ENCODE measurements at regions of chr20 and their contacts with region 1.

Region 1: DNA sequence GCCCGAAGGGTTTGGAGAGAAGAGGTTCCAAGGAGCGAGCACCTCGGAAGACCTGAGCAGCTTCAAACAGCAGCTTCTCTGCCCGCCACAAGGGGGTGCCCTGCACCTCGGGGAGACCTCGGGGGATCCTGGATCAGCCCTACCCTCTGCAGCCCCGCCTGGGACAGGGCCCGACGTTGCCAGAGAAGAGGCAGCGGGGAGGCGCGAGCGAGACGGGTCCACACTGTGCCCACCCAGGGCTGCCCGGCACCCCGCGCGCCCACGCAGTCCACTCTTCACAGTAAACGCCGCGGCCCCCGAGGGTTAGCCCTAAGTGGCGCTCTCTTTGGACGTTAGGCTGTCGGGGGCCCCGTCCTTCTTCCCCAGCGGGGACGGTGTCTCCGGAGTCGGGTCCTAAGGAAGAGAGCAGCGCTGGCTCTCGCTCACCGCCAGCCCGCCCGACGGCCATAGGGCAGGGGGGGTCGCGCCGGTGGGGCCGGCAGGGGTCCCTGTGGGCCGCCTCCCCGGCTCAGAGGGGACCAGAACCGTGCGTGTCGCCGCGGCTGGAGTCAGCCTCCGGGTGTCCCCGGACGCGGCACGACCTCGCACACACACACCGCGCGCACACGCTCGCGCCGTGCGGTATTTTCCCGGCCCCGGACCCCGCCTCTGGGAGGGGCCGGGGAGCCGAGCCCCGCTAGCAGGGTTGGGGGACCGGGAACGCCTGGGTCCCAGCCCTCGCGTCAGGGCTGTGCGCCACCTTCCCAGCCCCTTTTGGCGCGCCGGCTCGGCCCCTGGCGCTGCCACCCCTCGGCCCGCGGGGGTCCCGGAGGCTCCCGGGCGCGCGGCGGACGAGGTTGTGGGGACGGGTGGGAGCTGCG is 929 bp downstream of the CDH22 start:
- DNase-seq: peak; percentile 25
- H3K4me3 ChIP-seq: no peak overlapping the region
- H3K27ac ChIP-seq: no peak overlapping the region
- H3K4me1 ChIP-seq: peaks cover 8% of the 10 kb centered on the region
- H3K27me3 ChIP-seq: peaks cover 22% of the 10 kb centered on the region
- CTCF ChIP-seq: peak; percentile 70 to 94

Region 2: GRCh38 chr20:46022411-46023147 is 284.8 kb before region 1 on chr20:
- CTCF ChIA-PET with region 1: no interaction called
- dilution Hi-C with region 1: no loop called
- in situ Hi-C with region 1: no loop called
- intact Hi-C with region 1: loop called (anchors 10 kb)
- DNase-seq: peak; percentile 23
- H3K4me3 ChIP-seq: peak overlapping the region; percentile 8 to 59 (median 29)
- H3K27ac ChIP-seq: no peak overlapping the region
- H3K4me1 ChIP-seq: peaks cover 8% of the 10 kb centered on the region
- H3K27me3 ChIP-seq: no peaks in the 10 kb centered on the region
- CTCF ChIP-seq: peak; percentile 57 to 78

Region 3: GRCh38 chr20:46203510-46203837 is 103.9 kb before region 1 on chr20:
- CTCF ChIA-PET with region 1: interaction called, 11 read pairs
- dilution Hi-C with region 1: no loop called
- in situ Hi-C with region 1: no loop called
- intact Hi-C with region 1: no loop called
- DNase-seq: no peak
- H3K4me3 ChIP-seq: no peak overlapping the region
- H3K27ac ChIP-seq: no peak overlapping the region
- H3K4me1 ChIP-seq: peaks cover 4% of the 10 kb centered on the region
- H3K27me3 ChIP-seq: peaks cover 11% of the 10 kb centered on the region
- CTCF ChIP-seq: no peak

Region 4: DNA sequence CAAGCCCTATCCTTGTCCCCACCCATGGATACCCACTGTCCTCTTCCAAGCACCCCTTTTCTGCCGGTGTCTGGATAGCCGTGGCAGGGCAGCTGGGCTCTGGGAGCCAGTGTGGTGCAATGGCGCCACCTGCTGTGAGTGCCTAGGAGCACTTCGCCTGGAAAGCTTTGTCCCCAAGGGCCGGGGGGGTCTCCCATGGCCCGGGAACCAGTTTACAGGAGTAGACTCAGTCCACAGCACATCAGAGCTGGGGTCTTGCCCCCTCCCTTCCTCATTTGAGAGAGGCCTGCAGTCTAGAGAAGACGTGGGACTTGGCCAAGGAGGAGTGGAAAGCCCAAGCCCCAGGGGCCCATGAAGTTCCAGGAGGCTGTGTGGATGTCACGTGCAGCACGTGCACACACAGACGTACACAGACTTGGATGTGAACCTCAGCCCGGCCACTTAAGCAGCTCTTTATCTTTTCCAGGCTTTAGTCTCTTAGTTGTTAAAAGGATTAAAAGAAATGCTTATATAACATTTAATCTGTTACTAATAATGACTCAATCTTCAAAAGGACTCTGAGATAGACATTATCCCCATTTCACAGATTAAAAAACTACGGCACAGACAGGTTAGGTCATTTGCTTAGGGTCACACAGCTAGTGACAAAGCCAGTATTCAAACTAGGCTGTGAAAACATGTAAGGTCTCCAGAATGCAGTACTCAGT is 41.8 kb after region 1 on chr20:
- CTCF ChIA-PET with region 1: no interaction called
- dilution Hi-C with region 1: no loop called
- in situ Hi-C with region 1: no loop called
- intact Hi-C with region 1: loop called (anchors 1 kb)
- DNase-seq: no peak
- H3K4me3 ChIP-seq: no peak overlapping the region
- H3K27ac ChIP-seq: no peak overlapping the region
- H3K4me1 ChIP-seq: peaks cover 11% of the 10 kb centered on the region
- H3K27me3 ChIP-seq: no peaks in the 10 kb centered on the region
- CTCF ChIP-seq: peak; percentile 66 to 92

Region 5: GRCh38 chr20:46375771-46376170 is 68.4 kb after region 1 on chr20:
- CTCF ChIA-PET with region 1: no interaction called
- dilution Hi-C with region 1: no loop called
- in situ Hi-C with region 1: no loop called
- intact Hi-C with region 1: loop called (anchors 2 kb)
- DNase-seq: peak; percentile 41
- H3K4me3 ChIP-seq: no peak overlapping the region
- H3K27ac ChIP-seq: no peak overlapping the region
- H3K4me1 ChIP-seq: peaks cover 31% of the 10 kb centered on the region
- H3K27me3 ChIP-seq: no peaks in the 10 kb centered on the region
- CTCF ChIP-seq: no peak

Region 6: DNA sequence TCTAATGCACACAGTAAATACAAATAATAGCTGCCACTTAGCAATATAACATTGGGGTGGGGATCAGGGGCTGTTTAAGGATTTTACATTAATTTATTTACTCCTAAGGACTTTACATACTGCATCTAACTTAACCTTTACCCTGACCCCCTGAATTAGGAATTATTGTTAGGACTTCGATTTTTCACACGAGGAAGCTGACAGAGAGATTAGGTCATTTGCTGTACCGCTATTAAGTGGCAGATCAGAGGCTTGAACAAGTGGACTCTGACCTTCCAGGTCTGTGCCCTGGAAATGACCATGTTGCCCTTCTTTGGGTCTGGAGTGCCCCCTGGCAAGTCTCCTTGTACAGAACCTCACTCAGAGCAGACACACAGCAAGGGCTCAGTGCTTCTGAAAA is 104.3 kb after region 1 on chr20:
- CTCF ChIA-PET with region 1: no interaction called
- dilution Hi-C with region 1: no loop called
- in situ Hi-C with region 1: no loop called
- intact Hi-C with region 1: loop called (anchors 1 kb)
- DNase-seq: no peak
- H3K4me3 ChIP-seq: no peak overlapping the region
- H3K27ac ChIP-seq: no peak overlapping the region
- H3K4me1 ChIP-seq: peaks cover 19% of the 10 kb centered on the region
- H3K27me3 ChIP-seq: no peaks in the 10 kb centered on the region
- CTCF ChIP-seq: no peak

Region 7: DNA sequence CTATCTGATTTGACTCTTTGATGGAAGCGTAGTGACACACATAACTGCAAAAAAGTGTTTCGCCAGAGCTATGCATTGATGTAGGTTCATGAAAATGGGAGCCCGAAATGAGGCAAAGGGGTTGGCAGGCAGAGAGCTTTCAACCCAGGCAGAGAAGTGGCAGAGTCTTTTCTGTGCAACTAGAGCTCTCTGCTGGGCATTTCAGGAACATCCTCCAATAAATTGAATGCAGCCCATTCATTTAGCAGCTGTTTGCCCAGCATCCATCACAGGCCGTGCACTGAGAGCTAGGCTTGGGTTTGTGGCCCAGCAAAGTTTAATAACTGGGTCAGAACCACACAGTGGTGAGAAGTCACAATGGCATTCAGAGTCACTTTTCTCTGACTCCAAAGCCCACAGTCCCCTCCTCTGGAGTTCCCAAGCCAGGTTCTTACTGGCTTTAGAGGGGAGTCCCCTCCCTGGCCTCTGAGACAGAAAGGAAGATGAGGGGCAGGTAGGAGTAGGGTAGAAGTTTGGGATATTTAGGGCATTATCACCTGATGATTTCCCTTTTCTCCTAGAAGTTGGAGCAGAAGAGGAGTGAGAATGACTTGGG is 130.9 kb after region 1 on chr20:
- CTCF ChIA-PET with region 1: no interaction called
- dilution Hi-C with region 1: no loop called
- in situ Hi-C with region 1: no loop called
- intact Hi-C with region 1: loop called (anchors 1 kb)
- DNase-seq: peak; percentile 31
- H3K4me3 ChIP-seq: no peak overlapping the region
- H3K27ac ChIP-seq: no peak overlapping the region
- H3K4me1 ChIP-seq: no peaks in the 10 kb centered on the region
- H3K27me3 ChIP-seq: no peaks in the 10 kb centered on the region
- CTCF ChIP-seq: peak; percentile 39 to 57